Activated B cell treated with CpG ODN at 0.5 μM for 24 hours (primary cell): ENCODE measurements at regions of chr18 and their contacts with region 1.

Region 1: GRCh38 chr18:59085797-59086196 is 53.9 kb upstream of the SEC11C start:
- DNase-seq: no peak
- ATAC-seq: no peak
- H3K4me3 Mint-ChIP-seq: no peak overlapping the region
- H3K27ac Mint-ChIP-seq: no peak overlapping the region
- H3K4me1 Mint-ChIP-seq: peaks cover 33% of the 10 kb centered on the region
- H3K27me3 Mint-ChIP-seq: peaks cover 5% of the 10 kb centered on the region
- CTCF ChIP-seq: no peak

Region 2: DNA sequence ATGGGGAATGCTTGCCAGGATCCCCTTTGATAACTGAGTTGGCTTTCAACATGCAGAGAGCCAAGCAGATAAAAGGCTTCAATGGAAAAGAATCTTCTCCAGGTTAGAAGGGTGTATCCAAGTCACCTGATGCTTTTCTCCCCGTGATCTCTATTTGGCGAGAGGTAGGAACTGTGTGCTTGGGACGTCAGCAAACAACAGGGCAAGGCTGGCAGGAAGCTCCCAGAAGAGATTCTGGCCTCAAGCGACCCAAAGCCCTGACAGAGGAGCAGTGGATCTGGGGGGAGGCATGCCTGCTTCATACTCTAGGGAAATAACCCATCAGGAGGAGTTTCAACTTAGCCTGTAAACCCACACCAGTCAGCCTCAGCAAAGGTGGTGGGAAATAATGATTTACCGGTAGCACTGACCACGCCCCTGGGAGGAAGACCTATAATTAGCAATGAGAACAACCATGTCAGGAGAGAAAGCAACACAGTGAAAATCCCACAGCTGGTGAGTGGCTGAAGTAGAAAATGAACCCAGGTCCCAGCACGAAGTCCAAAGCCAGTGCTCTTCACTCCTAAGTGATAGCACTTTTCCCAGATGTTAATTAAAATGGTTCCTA is 22.4 kb before region 1 on chr18:
- CTCF ChIA-PET with region 1: no interaction called
- POLR2A ChIA-PET with region 1: no interaction called
- intact Hi-C with region 1: no loop called
- DNase-seq: no peak
- ATAC-seq: no peak
- H3K4me3 Mint-ChIP-seq: no peak overlapping the region
- H3K27ac Mint-ChIP-seq: no peak overlapping the region
- H3K4me1 Mint-ChIP-seq: peaks cover 16% of the 10 kb centered on the region
- H3K27me3 Mint-ChIP-seq: no peaks in the 10 kb centered on the region
- CTCF ChIP-seq: no peak

Region 3: GRCh38 chr18:59109375-59109774 is 23.6 kb after region 1 on chr18:
- CTCF ChIA-PET with region 1: interaction called, 6 read pairs
- POLR2A ChIA-PET with region 1: no interaction called
- intact Hi-C with region 1: loop called (anchors 2 kb)
- DNase-seq: no peak
- ATAC-seq: no peak
- H3K4me3 Mint-ChIP-seq: no peak overlapping the region
- H3K27ac Mint-ChIP-seq: no peak overlapping the region
- H3K4me1 Mint-ChIP-seq: no peaks in the 10 kb centered on the region
- H3K27me3 Mint-ChIP-seq: peaks cover 44% of the 10 kb centered on the region
- CTCF ChIP-seq: no peak

Region 4: DNA sequence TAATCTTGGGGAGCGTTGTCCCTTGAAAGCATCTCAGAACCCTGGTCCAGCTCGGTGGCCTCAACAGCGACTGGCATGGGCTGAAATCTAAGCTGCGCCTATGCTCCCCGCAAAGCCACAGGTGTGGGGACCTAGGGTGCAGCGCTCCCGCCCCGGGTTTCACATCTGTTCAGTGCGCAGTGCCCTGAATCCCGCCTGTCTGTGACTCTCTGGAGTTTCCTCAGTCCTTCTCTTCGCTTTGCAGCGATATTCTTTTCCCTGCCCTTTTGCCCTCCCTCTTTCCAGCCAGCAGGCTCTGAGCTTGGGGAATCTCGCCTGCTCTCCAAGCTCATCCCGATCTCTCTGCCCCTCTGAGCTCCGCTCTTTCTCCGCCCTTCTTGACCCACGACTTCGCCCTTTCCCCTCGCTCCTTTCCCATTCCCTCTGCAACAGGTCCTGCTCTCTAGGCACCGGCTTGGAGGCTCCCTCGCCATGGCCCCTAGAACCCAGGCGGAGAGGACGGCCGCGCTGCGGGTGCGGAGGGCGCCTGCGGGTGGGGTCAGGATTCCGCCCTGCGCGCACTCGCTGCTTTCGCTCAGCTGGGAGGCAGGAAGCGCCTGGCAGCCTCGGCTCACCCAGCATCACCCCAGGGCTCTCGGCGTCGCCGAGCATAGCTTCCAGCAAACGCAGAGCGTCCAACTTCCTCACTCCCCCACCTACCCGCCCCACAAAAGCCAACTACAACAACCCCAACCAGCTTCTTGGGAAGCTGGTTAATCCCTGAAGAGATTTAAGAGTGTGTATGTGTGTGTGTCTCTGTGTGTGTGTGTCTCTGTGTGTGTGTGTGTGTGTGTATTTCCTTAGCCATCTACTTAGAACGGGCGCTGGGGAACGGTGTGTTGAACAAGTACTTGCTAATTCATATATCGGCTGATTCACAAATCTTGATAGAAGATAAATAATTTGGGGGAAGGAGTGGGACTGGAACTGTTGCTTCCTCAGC is 135.3 kb after region 1 on chr18:
- CTCF ChIA-PET with region 1: no interaction called
- POLR2A ChIA-PET with region 1: no interaction called
- intact Hi-C with region 1: loop called (anchors 5 kb)
- DNase-seq: no peak
- ATAC-seq: no peak
- H3K4me3 Mint-ChIP-seq: peak overlapping the region; percentile 29
- H3K27ac Mint-ChIP-seq: no peak overlapping the region
- H3K4me1 Mint-ChIP-seq: peaks cover 14% of the 10 kb centered on the region
- H3K27me3 Mint-ChIP-seq: peaks cover 56% of the 10 kb centered on the region
- CTCF ChIP-seq: no peak

Region 5: GRCh38 chr18:59308248-59308937 is 222.6 kb after region 1 on chr18:
- CTCF ChIA-PET with region 1: no interaction called
- POLR2A ChIA-PET with region 1: no interaction called
- intact Hi-C with region 1: loop called (anchors 1 kb)
- DNase-seq: peak; percentile 66
- ATAC-seq: peak; percentile 85
- H3K4me3 Mint-ChIP-seq: peak overlapping the region; percentile 52
- H3K27ac Mint-ChIP-seq: no peak overlapping the region
- H3K4me1 Mint-ChIP-seq: peaks cover 6% of the 10 kb centered on the region
- H3K27me3 Mint-ChIP-seq: peaks cover 31% of the 10 kb centered on the region
- CTCF ChIP-seq: no peak

Region 6: GRCh38 chr18:59402432-59403090 is 316.8 kb after region 1 on chr18:
- CTCF ChIA-PET with region 1: interaction called, 25 read pairs
- POLR2A ChIA-PET with region 1: no interaction called
- intact Hi-C with region 1: loop called (anchors 2 kb)
- DNase-seq: peak; percentile 50
- ATAC-seq: peak; percentile 96
- H3K4me3 Mint-ChIP-seq: no peak overlapping the region
- H3K27ac Mint-ChIP-seq: no peak overlapping the region
- H3K4me1 Mint-ChIP-seq: peaks cover 3% of the 10 kb centered on the region
- H3K27me3 Mint-ChIP-seq: peaks cover 4% of the 10 kb centered on the region
- CTCF ChIP-seq: no peak